ENCODE measurements at regions of chr12 and their contacts with region 1.

Region 1: GRCh38 chr12:132921685-132922084 is 34.3 kb upstream of the CHFR start:
- DNase-seq: no peak
- ATAC-seq: no peak
- H3K4me3 ChIP-seq: no peak overlapping the region
- H3K4me3 Mint-ChIP-seq: no peak overlapping the region
- H3K27ac ChIP-seq: no peak overlapping the region
- H3K27ac Mint-ChIP-seq: no peak overlapping the region
- H3K4me1 ChIP-seq: no peaks in the 10 kb centered on the region
- H3K4me1 Mint-ChIP-seq: no peaks in the 10 kb centered on the region
- H3K27me3 ChIP-seq: no peaks in the 10 kb centered on the region
- H3K27me3 Mint-ChIP-seq: no peaks in the 10 kb centered on the region
- CTCF ChIP-seq: no peak

Region 2: GRCh38 chr12:132700212-132700822 is 221.4 kb before region 1 on chr12:
- CTCF ChIA-PET with region 1: no interaction called
- POLR2A ChIA-PET with region 1: no interaction called
- intact Hi-C with region 1: no loop called
- DNase-seq: no peak
- ATAC-seq: no peak
- H3K4me3 ChIP-seq: no peak overlapping the region
- H3K4me3 Mint-ChIP-seq: no peak overlapping the region
- H3K27ac ChIP-seq: no peak overlapping the region
- H3K27ac Mint-ChIP-seq: no peak overlapping the region
- H3K4me1 ChIP-seq: no peaks in the 10 kb centered on the region
- H3K4me1 Mint-ChIP-seq: no peaks in the 10 kb centered on the region
- H3K27me3 ChIP-seq: no peaks in the 10 kb centered on the region
- H3K27me3 Mint-ChIP-seq: no peaks in the 10 kb centered on the region
- CTCF ChIP-seq: no peak

Region 3: DNA sequence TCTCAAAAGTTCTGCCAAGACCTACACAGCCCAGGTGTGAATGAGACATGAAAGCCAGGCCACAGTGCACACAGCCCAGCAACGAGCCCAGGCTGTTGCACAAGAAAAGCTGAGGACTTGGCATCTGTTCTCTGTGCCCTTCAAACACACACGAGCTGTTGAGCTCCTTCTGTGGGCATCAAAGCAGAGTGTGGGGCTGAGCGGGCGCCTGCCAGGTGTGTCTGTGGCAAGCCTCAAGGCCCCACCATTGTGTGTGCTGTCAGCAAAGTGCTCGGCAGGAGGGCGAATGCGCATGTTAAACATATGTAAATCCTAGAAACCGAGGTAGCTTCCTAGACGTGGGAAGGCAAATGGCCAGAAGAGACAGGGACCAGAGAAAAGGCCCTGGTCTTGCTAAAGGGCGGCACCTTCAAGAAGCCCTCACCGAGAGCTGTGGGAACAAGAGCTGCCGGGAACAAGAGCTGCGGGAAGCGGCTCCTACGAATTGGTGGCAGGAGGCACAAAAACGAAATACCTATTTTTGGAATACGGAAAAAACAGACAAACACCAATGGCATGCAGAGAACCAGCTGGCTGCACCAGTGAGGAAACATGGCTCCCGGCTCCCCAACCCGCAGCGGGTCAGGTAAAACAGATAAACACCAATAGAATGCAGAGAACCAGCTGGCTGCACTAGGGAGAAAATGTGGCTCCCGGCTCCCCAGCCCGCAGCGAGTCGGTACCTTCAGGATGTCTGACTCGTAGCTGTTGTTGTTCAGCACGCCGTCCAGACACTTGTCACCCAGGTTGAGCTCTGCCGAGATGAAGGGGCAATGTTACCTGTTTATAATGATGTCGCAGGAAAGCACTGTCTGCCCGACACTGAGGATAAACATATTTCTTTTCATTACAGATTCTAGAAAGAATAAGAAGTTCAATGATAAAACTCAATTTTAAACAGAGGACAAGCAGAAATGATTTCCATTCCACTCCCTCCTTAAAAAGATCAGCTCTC is 74.0 kb before region 1 on chr12:
- CTCF ChIA-PET with region 1: no interaction called
- POLR2A ChIA-PET with region 1: no interaction called
- intact Hi-C with region 1: no loop called
- DNase-seq: peak in 4 of 14 experiments; percentile 26 to 36 (median 32)
- ATAC-seq: peak; percentile 82
- H3K4me3 ChIP-seq: no peak overlapping the region
- H3K4me3 Mint-ChIP-seq: peak overlapping the region; percentile 20
- H3K27ac ChIP-seq: peak overlapping the region in 1 of 2 donors; percentile 44
- H3K27ac Mint-ChIP-seq: peak overlapping the region; percentile 87
- H3K4me1 ChIP-seq: no peaks in the 10 kb centered on the region
- H3K4me1 Mint-ChIP-seq: peaks cover 17% of the 10 kb centered on the region
- H3K27me3 ChIP-seq: no peaks in the 10 kb centered on the region
- H3K27me3 Mint-ChIP-seq: no peaks in the 10 kb centered on the region
- CTCF ChIP-seq: no peak

Region 4: DNA sequence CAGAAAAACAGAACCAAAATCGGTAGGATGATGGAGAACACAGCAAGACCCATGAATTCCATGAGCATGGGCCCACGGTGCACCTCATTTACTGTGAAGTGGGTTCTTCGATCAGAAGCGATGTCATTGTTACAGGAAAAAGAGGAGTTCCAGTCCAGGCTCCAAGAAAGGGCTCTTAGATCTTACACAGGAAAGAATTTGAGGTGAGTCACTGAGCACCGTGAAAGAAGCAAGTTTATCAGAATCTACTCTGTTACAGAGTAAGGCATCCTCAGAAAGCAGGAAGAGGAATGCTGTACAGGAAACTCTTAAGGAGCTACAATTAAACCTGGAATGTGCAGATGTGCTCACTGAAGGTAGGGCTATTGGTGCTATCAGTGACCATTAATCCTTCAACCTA is 22.7 kb before region 1 on chr12:
- CTCF ChIA-PET with region 1: no interaction called
- POLR2A ChIA-PET with region 1: no interaction called
- intact Hi-C with region 1: no loop called
- DNase-seq: no peak
- ATAC-seq: no peak
- H3K4me3 ChIP-seq: no peak overlapping the region
- H3K4me3 Mint-ChIP-seq: no peak overlapping the region
- H3K27ac ChIP-seq: no peak overlapping the region
- H3K27ac Mint-ChIP-seq: no peak overlapping the region
- H3K4me1 ChIP-seq: no peaks in the 10 kb centered on the region
- H3K4me1 Mint-ChIP-seq: no peaks in the 10 kb centered on the region
- H3K27me3 ChIP-seq: no peaks in the 10 kb centered on the region
- H3K27me3 Mint-ChIP-seq: no peaks in the 10 kb centered on the region
- CTCF ChIP-seq: no peak

Region 5: DNA sequence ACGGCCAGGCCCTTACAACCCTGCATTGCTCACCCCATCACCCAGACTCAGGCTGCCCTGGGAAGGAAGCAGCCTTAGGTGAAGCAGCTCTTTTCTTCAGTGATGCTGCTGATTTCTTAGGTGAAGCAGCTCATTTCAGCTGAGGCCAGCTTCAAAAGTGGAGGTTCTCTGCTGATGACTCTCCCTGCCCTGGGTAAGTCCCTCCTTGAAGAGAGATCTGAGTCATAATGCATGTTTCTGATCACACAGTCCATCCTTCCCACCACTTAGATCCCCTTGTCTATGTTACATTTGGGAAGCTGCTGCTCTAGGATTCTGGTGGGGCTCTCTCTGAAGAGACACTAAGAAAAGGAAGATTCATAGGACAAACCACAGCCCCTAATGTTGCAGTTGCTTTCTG is 141.9 kb after region 1 on chr12:
- CTCF ChIA-PET with region 1: no interaction called
- POLR2A ChIA-PET with region 1: no interaction called
- intact Hi-C with region 1: loop called in 1 of 2 experiments (anchors 5 kb)
- DNase-seq: no peak
- ATAC-seq: no peak
- H3K4me3 ChIP-seq: no peak overlapping the region
- H3K4me3 Mint-ChIP-seq: no peak overlapping the region
- H3K27ac ChIP-seq: no peak overlapping the region
- H3K27ac Mint-ChIP-seq: no peak overlapping the region
- H3K4me1 ChIP-seq: no peaks in the 10 kb centered on the region
- H3K4me1 Mint-ChIP-seq: no peaks in the 10 kb centered on the region
- H3K27me3 ChIP-seq: no peaks in the 10 kb centered on the region
- H3K27me3 Mint-ChIP-seq: no peaks in the 10 kb centered on the region
- CTCF ChIP-seq: no peak